OCI-LY7 (cell line): ENCODE measurements at regions of chr5 and their contacts with region 1.

Region 1: DNA sequence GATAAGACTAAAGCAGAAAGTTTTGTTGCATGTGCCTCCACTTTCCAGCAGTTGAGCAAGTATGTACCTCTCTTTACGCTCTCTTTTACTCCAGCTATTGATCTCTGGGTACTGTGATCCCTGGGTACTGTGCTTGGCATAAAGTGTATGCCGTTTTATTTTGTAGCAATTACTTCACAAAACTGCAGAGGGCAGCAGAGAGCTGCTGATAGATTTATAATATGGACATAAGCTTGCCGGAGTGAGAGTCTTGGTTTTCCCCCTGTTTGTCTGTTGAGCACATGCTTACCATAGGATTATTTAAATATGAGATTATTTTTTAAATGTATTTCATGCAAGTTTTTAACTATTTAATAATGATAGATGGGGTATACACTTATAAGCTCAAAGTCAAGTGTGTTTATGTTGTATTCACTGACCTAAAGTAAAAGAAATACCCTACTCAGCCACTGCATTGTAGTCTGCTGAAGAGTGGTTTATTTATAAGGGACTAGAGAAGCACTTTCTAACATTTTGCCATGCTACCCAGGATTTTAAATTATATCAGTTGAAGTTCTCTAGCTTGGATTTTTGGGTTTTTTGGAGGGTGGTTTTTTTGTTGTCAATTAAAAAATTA is 13.0 kb downstream of the TTC1 start:
- DNase-seq: peak; percentile 63
- H3K4me3 ChIP-seq: no peak overlapping the region
- H3K27ac ChIP-seq: no peak overlapping the region
- H3K4me1 ChIP-seq: no peaks in the 10 kb centered on the region
- CTCF ChIP-seq: peak; percentile 88

Region 2: DNA sequence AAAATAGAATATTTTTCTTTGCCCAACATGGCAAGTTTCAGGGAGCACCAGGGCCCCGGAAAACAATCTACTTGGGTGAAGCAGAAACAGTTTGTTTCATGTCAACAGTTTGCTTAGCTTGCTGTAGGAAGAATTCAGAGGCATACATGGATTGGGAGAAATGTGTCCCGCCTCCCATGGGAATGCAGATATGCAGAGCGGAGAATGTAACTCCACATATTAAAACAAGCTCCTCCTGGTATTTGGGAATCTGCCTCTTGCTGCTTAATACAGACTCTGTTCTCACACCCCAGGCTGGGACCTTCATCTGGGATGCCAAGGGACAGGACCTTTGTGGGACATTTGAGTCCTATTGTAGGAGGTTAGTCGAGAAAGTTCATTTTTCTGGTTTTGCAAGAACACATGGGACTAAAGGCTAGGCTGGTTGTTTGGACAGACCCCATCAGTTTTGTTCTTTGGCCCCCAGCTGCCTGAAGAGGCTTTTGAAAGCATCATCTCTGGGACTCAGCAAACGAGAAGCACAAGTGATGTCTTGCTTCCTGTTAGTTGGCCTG is 326.1 kb before region 1 on chr5:
- CTCF ChIA-PET with region 1: no interaction called
- POLR2A ChIA-PET with region 1: no interaction called
- intact Hi-C with region 1: no loop called
- DNase-seq: no peak
- H3K4me3 ChIP-seq: no peak overlapping the region
- H3K27ac ChIP-seq: no peak overlapping the region
- H3K4me1 ChIP-seq: no peaks in the 10 kb centered on the region
- CTCF ChIP-seq: no peak

Region 3: GRCh38 chr5:159928122-159928909 is 93.6 kb before region 1 on chr5:
- CTCF ChIA-PET with region 1: no interaction called
- POLR2A ChIA-PET with region 1: no interaction called
- intact Hi-C with region 1: no loop called
- DNase-seq: no peak
- H3K4me3 ChIP-seq: no peak overlapping the region
- H3K27ac ChIP-seq: no peak overlapping the region
- H3K4me1 ChIP-seq: no peaks in the 10 kb centered on the region
- CTCF ChIP-seq: no peak

Region 4: DNA sequence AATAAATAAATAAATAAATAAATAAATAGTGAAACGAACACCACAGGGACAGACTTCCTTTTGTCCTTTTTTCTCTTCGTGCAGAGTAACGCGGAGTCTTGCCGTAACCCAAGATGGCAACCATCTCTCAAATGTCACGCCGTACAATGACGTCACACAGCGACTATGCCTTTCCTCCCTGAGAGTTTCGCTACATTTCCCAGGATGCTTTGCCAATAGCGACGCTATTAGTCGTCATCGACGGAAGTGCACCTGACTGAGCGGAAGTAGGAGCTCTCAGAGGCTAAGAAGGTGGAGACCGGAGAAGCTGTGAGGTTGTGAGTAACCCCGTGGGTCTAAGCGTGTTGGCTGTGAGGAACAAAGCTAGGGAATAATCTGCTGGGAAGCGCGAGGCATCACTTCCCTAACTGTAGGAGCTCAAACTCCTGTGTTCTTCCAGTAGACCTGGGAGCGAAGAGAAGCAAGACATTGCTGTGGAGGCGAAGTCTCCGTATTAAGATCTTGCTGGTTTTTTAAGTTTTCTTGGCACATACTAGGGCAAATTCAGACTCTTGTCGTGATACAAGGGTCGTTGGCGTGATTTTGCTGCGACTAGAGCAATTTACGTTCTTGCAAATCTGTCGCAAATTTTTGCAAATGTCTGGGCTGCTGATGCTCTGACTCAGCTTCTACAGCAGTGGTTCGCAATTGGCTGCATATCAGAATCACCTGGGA is 12.9 kb before region 1 on chr5 and contains the start of gene TTC1:
- CTCF ChIA-PET with region 1: interaction called, 4 read pairs
- POLR2A ChIA-PET with region 1: interaction called, 13 read pairs
- intact Hi-C with region 1: no loop called
- DNase-seq: peak; percentile 99
- H3K4me3 ChIP-seq: peak within 1 kb of the TSS; percentile 88
- H3K27ac ChIP-seq: peak within 1 kb of the TSS; percentile 32
- H3K4me1 ChIP-seq: peaks cover 14% of the 10 kb centered on the region
- CTCF ChIP-seq: no peak
- total RNA-seq, gene TTC1: 32.6 and 47.2 TPM in 2 replicates

Region 5: DNA sequence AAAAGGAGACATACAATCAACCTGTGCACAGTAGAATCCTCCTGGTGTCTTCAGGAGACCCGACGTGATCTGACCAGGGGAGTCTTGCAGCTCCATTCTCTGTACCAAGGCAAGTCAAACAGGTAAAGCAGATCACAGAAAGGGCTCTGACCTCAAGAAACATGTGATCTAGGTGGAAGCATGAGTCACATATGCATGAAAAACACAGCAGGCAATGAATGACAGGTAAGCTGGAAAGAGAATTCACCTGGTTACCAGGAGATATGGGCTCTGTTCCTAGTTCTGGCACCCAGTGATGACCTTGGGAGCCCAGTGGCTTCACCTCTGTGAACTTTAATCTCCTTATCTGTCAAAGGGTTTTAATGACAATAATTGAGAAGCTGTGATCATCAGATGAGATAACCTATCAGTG is 188.0 kb after region 1 on chr5:
- CTCF ChIA-PET with region 1: no interaction called
- POLR2A ChIA-PET with region 1: interaction called, 3 read pairs
- intact Hi-C with region 1: loop called (anchors 10 kb)
- DNase-seq: no peak
- H3K4me3 ChIP-seq: no peak overlapping the region
- H3K27ac ChIP-seq: no peak overlapping the region
- H3K4me1 ChIP-seq: no peaks in the 10 kb centered on the region
- CTCF ChIP-seq: no peak

Region 6: GRCh38 chr5:160342403-160342941 is 320.5 kb after region 1 on chr5:
- CTCF ChIA-PET with region 1: interaction called, 3 read pairs
- POLR2A ChIA-PET with region 1: interaction called, 6 read pairs
- intact Hi-C with region 1: loop called (anchors 1 kb)
- DNase-seq: no peak
- H3K4me3 ChIP-seq: no peak overlapping the region
- H3K27ac ChIP-seq: no peak overlapping the region
- H3K4me1 ChIP-seq: no peaks in the 10 kb centered on the region
- CTCF ChIP-seq: no peak